ENCODE measurements at regions of chr18 and their contacts with region 1.

Region 1: GRCh38 chr18:75070625-75071483 is 138.1 kb downstream of the PTGR3 start:
- DNase-seq: peak; percentile 70
- ATAC-seq: no peak

Region 2: GRCh38 chr18:75173125-75173432 is 102.2 kb after region 1 on chr18:
- intact Hi-C with region 1: loop called (anchors 5 kb)
- DNase-seq: no peak
- ATAC-seq: peak; percentile 32